ENCODE measurements at regions of chr17 and their contacts with region 1.

Region 1: DNA sequence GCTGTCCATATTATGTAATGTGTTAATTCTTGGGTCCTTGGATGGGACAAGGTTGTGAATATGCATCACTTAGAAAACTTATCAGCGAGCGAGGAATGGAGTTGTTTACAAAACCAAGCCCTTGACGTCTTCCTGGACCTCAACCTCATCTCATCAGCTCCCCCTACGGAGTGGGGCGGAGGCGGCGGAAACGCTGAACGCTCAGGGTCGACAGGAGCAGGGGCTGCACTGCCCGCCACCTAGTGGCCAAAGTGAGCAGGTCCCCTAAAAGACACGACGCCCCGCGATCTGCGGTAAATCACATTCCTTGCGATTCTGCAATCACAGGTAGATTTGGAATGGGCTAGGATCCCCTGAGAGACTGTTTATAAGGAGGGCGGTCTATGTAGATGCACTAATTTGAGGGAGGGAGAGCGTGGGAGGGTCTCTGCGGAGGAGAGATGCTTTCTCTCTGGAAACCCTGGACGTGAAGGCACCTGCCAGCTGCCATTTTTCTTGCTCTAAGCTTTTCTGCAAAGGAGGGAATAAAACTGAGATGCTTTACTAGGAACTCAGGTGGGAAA is 5.4 kb upstream of the ICAM2 start:
- DNase-seq: peak; percentile 81 to 87
- ATAC-seq: peak; percentile 93 to 95
- H3K4me3 ChIP-seq: peak overlapping the region; percentile 35
- H3K27ac ChIP-seq: peak overlapping the region in 1 of 2 experiments; percentile 21; a peak in 1 of 6 replicates
- H3K4me1 ChIP-seq: peaks cover 3% of the 10 kb centered on the region; the same call in 1 of the 3 replicates
- CTCF ChIP-seq: peak; percentile 99
- EP300 ChIP-seq: no peak
- POLR2A ChIP-seq: no peak
- RAD21 ChIP-seq: peak; percentile 77 to 80

Region 2: DNA sequence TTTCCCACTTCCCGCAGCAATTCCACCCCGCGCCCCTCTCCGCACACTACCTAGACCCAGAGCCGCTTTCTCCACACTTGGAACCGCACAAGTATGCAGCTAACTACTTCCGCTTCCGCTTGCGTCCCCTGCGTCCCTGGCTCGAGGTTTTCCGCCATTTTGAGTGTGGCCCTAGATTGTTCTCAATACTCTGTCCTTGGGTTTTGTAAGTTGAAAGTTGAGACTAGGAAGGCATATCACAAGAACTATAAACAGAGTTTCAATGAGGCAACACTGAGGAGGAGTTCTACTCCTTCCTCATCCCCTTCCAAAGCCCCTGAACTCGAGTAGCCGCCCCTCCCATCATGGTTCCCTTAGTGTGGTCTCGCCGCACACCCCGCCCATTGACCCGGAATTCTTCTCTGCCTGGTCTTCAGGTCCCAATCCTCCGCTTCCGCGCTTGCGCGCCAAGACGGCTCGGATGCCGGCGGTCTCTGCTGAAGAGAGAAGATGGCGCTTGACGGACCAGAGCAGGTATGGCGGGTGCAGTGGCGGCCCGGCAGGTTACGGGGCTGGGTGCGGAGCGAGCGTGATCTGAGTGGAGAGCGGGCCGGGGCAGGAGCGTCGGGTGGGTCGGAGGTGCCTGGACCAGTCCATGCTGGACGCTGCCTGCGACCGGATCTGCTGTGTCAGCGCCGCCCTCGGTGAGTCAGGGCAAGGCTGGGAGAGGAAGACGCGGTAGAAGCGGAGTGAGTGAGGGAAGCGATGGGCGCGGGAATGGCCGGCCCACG is 198.6 kb before region 1 on chr17 and contains the starts of genes FTSJ3 and PSMC5:
- CTCF ChIA-PET with region 1: no interaction called
- POLR2A ChIA-PET with region 1: no interaction called
- DNase-seq: peak; percentile 97
- ATAC-seq: peak; percentile 89 to 93
- H3K4me3 ChIP-seq: peak within 1 kb of the TSS; percentile 74
- H3K27ac ChIP-seq: peak within 1 kb of the TSS; percentile 94 to 96
- H3K4me1 ChIP-seq: peaks cover 22% of the 10 kb centered on the region
- CTCF ChIP-seq: peak; percentile 49
- EP300 ChIP-seq: no peak
- POLR2A ChIP-seq: peak; percentile 94
- RAD21 ChIP-seq: no peak
- polyA plus RNA-seq, gene FTSJ3: 62.6 and 74.5 TPM in 2 replicates
- polyA plus RNA-seq, gene PSMC5: 222 and 303 TPM in 2 replicates

Region 3: GRCh38 chr17:63904316-63904715 is 121.5 kb before region 1 on chr17:
- CTCF ChIA-PET with region 1: interaction called, 34 read pairs
- POLR2A ChIA-PET with region 1: no interaction called
- DNase-seq: no peak
- ATAC-seq: no peak
- H3K4me3 ChIP-seq: no peak overlapping the region
- H3K27ac ChIP-seq: no peak overlapping the region
- H3K4me1 ChIP-seq: no peaks in the 10 kb centered on the region; the same call in 2 of the 3 replicates
- CTCF ChIP-seq: no peak
- EP300 ChIP-seq: no peak
- POLR2A ChIP-seq: no peak
- RAD21 ChIP-seq: no peak

Region 4: GRCh38 chr17:63954402-63955063 is 71.3 kb before region 1 on chr17:
- CTCF ChIA-PET with region 1: interaction called, 24 read pairs
- POLR2A ChIA-PET with region 1: no interaction called
- DNase-seq: no peak
- ATAC-seq: peak; percentile 6 to 26; a peak in 1 of 6 replicates
- H3K4me3 ChIP-seq: no peak overlapping the region
- H3K27ac ChIP-seq: no peak overlapping the region
- H3K4me1 ChIP-seq: no peaks in the 10 kb centered on the region
- CTCF ChIP-seq: no peak
- EP300 ChIP-seq: no peak
- POLR2A ChIP-seq: no peak
- RAD21 ChIP-seq: no peak

Region 5: DNA sequence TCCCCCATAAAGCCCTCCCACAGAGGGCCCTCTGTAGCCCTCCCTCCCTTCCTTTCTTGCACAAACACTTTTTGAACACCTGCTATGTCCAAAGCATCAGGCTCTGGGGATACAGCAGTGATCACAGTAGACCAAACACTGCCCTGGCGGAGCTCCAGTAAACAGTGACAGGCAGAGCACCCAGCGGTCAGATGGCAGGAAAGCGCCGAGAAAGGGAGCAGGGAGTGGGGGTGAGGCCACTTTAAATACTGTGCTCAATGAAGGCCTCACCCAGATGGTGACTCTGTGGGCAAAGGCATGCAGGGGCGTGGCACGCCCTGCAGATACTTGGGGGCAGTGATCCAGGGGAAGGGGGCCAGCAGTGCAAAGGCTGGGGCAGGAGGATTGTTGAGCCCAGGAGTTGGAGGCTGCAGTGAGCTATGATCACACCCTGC is 20.1 kb before region 1 on chr17:
- CTCF ChIA-PET with region 1: interaction called, 107 read pairs
- POLR2A ChIA-PET with region 1: no interaction called
- DNase-seq: peak; percentile 56 to 64
- ATAC-seq: peak; percentile 22 to 66; a peak in 4 of 6 replicates
- H3K4me3 ChIP-seq: no peak overlapping the region
- H3K27ac ChIP-seq: peak overlapping the region in 1 of 2 experiments; percentile 49; a peak in 3 of 6 replicates
- H3K4me1 ChIP-seq: peaks cover 28% of the 10 kb centered on the region
- CTCF ChIP-seq: no peak
- EP300 ChIP-seq: 0 out of 5 replicates have a peak, but pooled peaks of 1 of the 2 experiments have one; percentile 11
- POLR2A ChIP-seq: no peak
- RAD21 ChIP-seq: no peak

Region 6: GRCh38 chr17:64073771-64074703 is 48.2 kb after region 1 on chr17:
- CTCF ChIA-PET with region 1: interaction called, 27 read pairs
- POLR2A ChIA-PET with region 1: no interaction called
- DNase-seq: no peak
- ATAC-seq: peak; percentile 54 to 59
- H3K4me3 ChIP-seq: no peak overlapping the region; the same call in 2 of the 3 replicates
- H3K27ac ChIP-seq: peak overlapping the region; percentile 89 to 90
- H3K4me1 ChIP-seq: peaks cover 39% of the 10 kb centered on the region
- CTCF ChIP-seq: no peak
- EP300 ChIP-seq: no peak
- POLR2A ChIP-seq: no peak
- RAD21 ChIP-seq: no peak

Region 7: GRCh38 chr17:64129764-64130558 is 104.1 kb after region 1 on chr17 and contains the start of gene ERN1:
- CTCF ChIA-PET with region 1: interaction called, 863 read pairs
- POLR2A ChIA-PET with region 1: interaction called, 19 read pairs
- DNase-seq: peak; percentile 94 to 95
- ATAC-seq: peak; percentile 92 to 96
- H3K4me3 ChIP-seq: peak within 1 kb of the TSS; percentile 80
- H3K27ac ChIP-seq: peak within 1 kb of the TSS; percentile 85 to 95
- H3K4me1 ChIP-seq: peaks cover 35% of the 10 kb centered on the region
- CTCF ChIP-seq: no peak
- EP300 ChIP-seq: no peak
- POLR2A ChIP-seq: peak; percentile 98
- RAD21 ChIP-seq: 0 out of 5 replicates have a peak, but pooled peaks of 1 of the 2 experiments have one; percentile 47
- polyA plus RNA-seq, gene ERN1: 19.8 and 23.3 TPM in 2 replicates

Region 8: DNA sequence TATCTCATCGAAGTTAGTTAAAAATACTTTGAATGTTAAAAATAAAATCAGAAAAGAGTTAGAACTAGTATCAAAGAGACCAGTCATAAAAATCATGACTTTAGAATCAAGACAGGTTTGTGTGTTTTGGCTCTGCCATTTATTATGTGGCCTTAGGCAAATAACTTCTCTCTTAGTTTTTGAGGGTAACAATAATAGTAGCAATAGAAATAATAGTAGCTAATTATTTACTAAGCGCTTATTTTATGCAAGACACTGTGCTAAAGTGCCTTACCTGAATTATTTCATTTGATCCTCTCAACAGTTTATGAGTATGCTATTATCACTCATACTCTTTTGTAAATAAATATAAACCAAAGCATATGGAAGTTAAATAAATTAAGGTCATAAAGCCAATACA is 559.3 kb after region 1 on chr17:
- CTCF ChIA-PET with region 1: no interaction called
- POLR2A ChIA-PET with region 1: no interaction called
- DNase-seq: no peak
- ATAC-seq: no peak
- H3K4me3 ChIP-seq: no peak overlapping the region
- H3K27ac ChIP-seq: no peak overlapping the region
- H3K4me1 ChIP-seq: 0 out of 3 replicates have a peak, but pooled peaks cover 2% of the 10 kb centered on the region
- CTCF ChIP-seq: no peak
- EP300 ChIP-seq: no peak
- POLR2A ChIP-seq: no peak
- RAD21 ChIP-seq: no peak

Measured in A549 (cell line).